ENCODE measurements at regions of chr9 and their contacts with region 1.

Region 1: GRCh38 chr9:113657703-113658544 is 194.4 kb downstream of the RGS3 start:
- DNase-seq: peak; percentile 85
- H3K4me3 Mint-ChIP-seq: no peak overlapping the region
- H3K27ac Mint-ChIP-seq: peak overlapping the region; percentile 34
- H3K4me1 Mint-ChIP-seq: peaks cover 5% of the 10 kb centered on the region
- H3K27me3 Mint-ChIP-seq: peaks cover 30% of the 10 kb centered on the region

Region 2: GRCh38 chr9:113275157-113276131 is 382.5 kb before region 1 on chr9 and contains the starts of genes CDC26 and PRPF4:
- CTCF ChIA-PET with region 1: interaction called, 66 read pairs
- DNase-seq: peak; percentile 98
- H3K4me3 Mint-ChIP-seq: no peak within 1 kb of the TSS
- H3K27ac Mint-ChIP-seq: no peak within 1 kb of the TSS
- H3K4me1 Mint-ChIP-seq: peaks cover 24% of the 10 kb centered on the region
- H3K27me3 Mint-ChIP-seq: no peaks in the 10 kb centered on the region

Region 3: GRCh38 chr9:113309204-113309813 is 348.6 kb before region 1 on chr9:
- CTCF ChIA-PET with region 1: interaction called, 13 read pairs
- DNase-seq: peak; percentile 52
- H3K4me3 Mint-ChIP-seq: no peak overlapping the region
- H3K27ac Mint-ChIP-seq: no peak overlapping the region
- H3K4me1 Mint-ChIP-seq: no peaks in the 10 kb centered on the region
- H3K27me3 Mint-ChIP-seq: peaks cover 10% of the 10 kb centered on the region

Region 4: DNA sequence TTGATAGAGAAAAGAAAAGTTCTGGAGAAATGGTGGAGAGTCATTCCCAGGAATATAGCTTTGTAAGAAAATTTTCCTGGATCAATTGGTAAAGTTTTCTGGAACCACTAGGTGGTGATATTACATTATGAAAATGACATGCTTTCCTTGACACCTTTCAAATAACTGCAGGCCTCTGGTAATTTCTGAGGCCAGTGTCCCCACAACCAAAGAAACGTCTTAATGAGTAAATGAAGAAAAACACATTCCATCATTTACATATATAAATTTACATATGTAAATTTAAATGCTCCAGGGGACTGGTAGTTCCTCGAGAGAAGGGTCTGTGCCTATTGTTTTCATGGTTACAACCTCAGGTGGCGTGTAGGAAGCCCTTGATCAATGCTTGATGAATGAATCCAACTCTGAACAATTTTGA is 211.6 kb before region 1 on chr9:
- CTCF ChIA-PET with region 1: interaction called, 153 read pairs
- DNase-seq: peak; percentile 27
- H3K4me3 Mint-ChIP-seq: no peak overlapping the region
- H3K27ac Mint-ChIP-seq: no peak overlapping the region
- H3K4me1 Mint-ChIP-seq: peaks cover 3% of the 10 kb centered on the region
- H3K27me3 Mint-ChIP-seq: no peaks in the 10 kb centered on the region

Region 5: DNA sequence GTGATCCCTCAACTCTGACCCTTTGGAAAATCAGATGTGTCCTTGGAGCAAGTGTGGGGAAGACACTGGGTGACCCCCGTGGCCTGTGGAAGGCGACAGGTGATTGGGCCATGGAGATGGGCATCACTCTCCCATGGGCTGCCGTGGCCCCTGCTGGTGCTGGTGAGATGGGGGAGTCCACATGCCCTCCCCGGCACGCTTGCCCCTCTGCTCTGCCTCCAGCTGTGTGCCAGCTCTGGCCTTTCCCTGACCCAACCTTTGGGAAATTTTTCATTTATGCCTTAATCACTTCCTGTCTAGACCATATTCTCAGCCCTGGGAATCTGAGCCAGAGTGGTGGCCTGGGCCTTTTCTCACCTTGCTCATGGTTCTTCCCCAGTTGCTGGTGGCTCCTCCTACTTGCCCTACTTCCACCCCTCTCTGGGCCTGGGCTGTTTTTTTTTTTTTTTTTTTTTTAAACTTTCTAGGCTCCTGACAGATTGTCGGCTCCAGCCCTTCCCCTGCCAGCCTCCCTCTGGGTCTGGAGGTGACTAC is 137.7 kb before region 1 on chr9:
- CTCF ChIA-PET with region 1: no interaction called
- DNase-seq: peak; percentile 32
- H3K4me3 Mint-ChIP-seq: no peak overlapping the region
- H3K27ac Mint-ChIP-seq: no peak overlapping the region
- H3K4me1 Mint-ChIP-seq: peaks cover 92% of the 10 kb centered on the region
- H3K27me3 Mint-ChIP-seq: no peaks in the 10 kb centered on the region

Region 6: GRCh38 chr9:113578882-113579282 is 79.0 kb before region 1 on chr9:
- CTCF ChIA-PET with region 1: interaction called, 429 read pairs
- DNase-seq: peak; percentile 91
- H3K4me3 Mint-ChIP-seq: peak overlapping the region; percentile 85
- H3K27ac Mint-ChIP-seq: peak overlapping the region; percentile 96
- H3K4me1 Mint-ChIP-seq: peaks cover 81% of the 10 kb centered on the region
- H3K27me3 Mint-ChIP-seq: no peaks in the 10 kb centered on the region

Region 7: GRCh38 chr9:113602126-113603044 is 55.5 kb before region 1 on chr9:
- CTCF ChIA-PET with region 1: interaction called, 429 read pairs
- DNase-seq: peak; percentile 33
- H3K4me3 Mint-ChIP-seq: no peak overlapping the region
- H3K27ac Mint-ChIP-seq: no peak overlapping the region
- H3K4me1 Mint-ChIP-seq: no peaks in the 10 kb centered on the region
- H3K27me3 Mint-ChIP-seq: no peaks in the 10 kb centered on the region

Region 8: GRCh38 chr9:113682297-113682771 is 24.4 kb after region 1 on chr9:
- CTCF ChIA-PET with region 1: interaction called, 14 read pairs
- DNase-seq: peak; percentile 60
- H3K4me3 Mint-ChIP-seq: no peak overlapping the region
- H3K27ac Mint-ChIP-seq: no peak overlapping the region
- H3K4me1 Mint-ChIP-seq: no peaks in the 10 kb centered on the region
- H3K27me3 Mint-ChIP-seq: peaks cover 63% of the 10 kb centered on the region

Region 9: GRCh38 chr9:113705928-113706519 is 48.1 kb after region 1 on chr9:
- CTCF ChIA-PET with region 1: no interaction called
- DNase-seq: no peak
- H3K4me3 Mint-ChIP-seq: no peak overlapping the region
- H3K27ac Mint-ChIP-seq: no peak overlapping the region
- H3K4me1 Mint-ChIP-seq: no peaks in the 10 kb centered on the region
- H3K27me3 Mint-ChIP-seq: peaks cover 14% of the 10 kb centered on the region